GM12878 (cell line): ENCODE measurements at regions of chrX and their contacts with region 1.

Region 1: GRCh38 chrX:7059214-7059838 is 88.2 kb upstream of the STS start:
- DNase-seq: peak; percentile 89
- ATAC-seq: peak; percentile 95
- H3K4me3 ChIP-seq: peak overlapping the region; percentile 34; the same call in 1 of the 2 replicates
- H3K27ac ChIP-seq: peak overlapping the region; percentile 72
- H3K4me1 ChIP-seq: peaks cover 25% of the 10 kb centered on the region
- H3K27me3 ChIP-seq: no peaks in the 10 kb centered on the region
- CTCF ChIP-seq: no peak; a peak in 1 of 6 replicates
- EP300 ChIP-seq: peak; percentile 90 to 93
- POLR2A ChIP-seq: no peak
- RAD21 ChIP-seq: peak; percentile 45

Region 2: GRCh38 chrX:6748595-6748994 is 310.7 kb before region 1 on chrX:
- CTCF ChIA-PET with region 1: no interaction called
- POLR2A ChIA-PET with region 1: no interaction called
- RAD21 ChIA-PET with region 1: no interaction called
- SMC1A ChIA-PET with region 1: no interaction called
- in situ Hi-C with region 1: loop called (anchors 10 kb)
- intact Hi-C with region 1: no loop called
- DNase-seq: no peak
- ATAC-seq: peak; percentile 64
- H3K4me3 ChIP-seq: no peak overlapping the region
- H3K27ac ChIP-seq: no peak overlapping the region
- H3K4me1 ChIP-seq: no peaks in the 10 kb centered on the region
- H3K27me3 ChIP-seq: no peaks in the 10 kb centered on the region
- CTCF ChIP-seq: no peak
- EP300 ChIP-seq: no peak
- POLR2A ChIP-seq: no peak
- RAD21 ChIP-seq: no peak

Region 3: DNA sequence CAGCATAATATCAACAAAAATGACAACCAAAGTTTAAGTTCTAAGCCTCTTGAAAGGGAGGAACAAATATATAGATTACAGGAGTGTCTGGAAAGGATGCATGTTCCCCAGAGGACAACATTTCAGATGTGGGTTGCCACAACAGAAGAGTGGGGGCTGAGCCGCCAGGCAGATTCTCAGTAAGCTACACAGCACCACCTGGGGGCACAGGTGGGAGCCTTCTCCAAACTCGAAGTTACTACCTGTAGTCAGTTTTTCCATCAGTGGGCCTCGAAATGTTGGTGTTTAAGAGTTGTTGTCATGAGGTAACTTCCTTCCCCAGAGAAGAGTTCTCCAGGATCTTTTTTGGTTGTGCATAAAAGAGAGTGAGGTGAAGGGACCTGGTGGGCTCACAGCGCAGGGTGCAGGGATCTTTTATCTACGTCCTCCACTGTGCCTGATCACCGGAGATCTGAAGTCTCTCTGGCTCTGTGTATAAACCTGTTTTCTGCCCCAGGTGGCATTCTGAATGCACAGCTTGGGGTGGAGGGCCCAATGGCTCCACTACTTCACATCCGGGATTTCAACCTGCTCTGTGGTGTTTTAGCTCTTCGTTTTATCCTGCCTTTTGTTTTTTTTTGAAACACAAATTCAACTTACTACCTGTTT is 29.8 kb after region 1 on chrX:
- CTCF ChIA-PET with region 1: interaction called, 15 read pairs
- POLR2A ChIA-PET with region 1: interaction called, 4 read pairs
- RAD21 ChIA-PET with region 1: interaction called, 30 read pairs
- SMC1A ChIA-PET with region 1: interaction called, 55 read pairs
- in situ Hi-C with region 1: no loop called
- intact Hi-C with region 1: loop called (anchors 1 kb)
- DNase-seq: no peak
- ATAC-seq: peak; percentile 57
- H3K4me3 ChIP-seq: no peak overlapping the region
- H3K27ac ChIP-seq: peak overlapping the region; percentile 42; the same call in 1 of the 2 replicates
- H3K4me1 ChIP-seq: peaks cover 48% of the 10 kb centered on the region
- H3K27me3 ChIP-seq: no peaks in the 10 kb centered on the region
- CTCF ChIP-seq: peak; percentile 51 to 61 (median 59)
- EP300 ChIP-seq: no peak
- POLR2A ChIP-seq: no peak
- RAD21 ChIP-seq: peak; percentile 78

Region 4: GRCh38 chrX:7147978-7148824 is 88.9 kb after region 1 on chrX and contains the start of gene PUDP:
- CTCF ChIA-PET with region 1: interaction called, 3 read pairs
- POLR2A ChIA-PET with region 1: interaction called, 3 read pairs
- RAD21 ChIA-PET with region 1: interaction called, 3 read pairs
- SMC1A ChIA-PET with region 1: interaction called, 11 read pairs
- in situ Hi-C with region 1: no loop called
- intact Hi-C with region 1: loop called (anchors 2 kb)
- DNase-seq: no peak
- ATAC-seq: peak; percentile 86
- H3K4me3 ChIP-seq: peak within 1 kb of the TSS; percentile 98
- H3K27ac ChIP-seq: peak within 1 kb of the TSS; percentile 87
- H3K4me1 ChIP-seq: peaks cover 15% of the 10 kb centered on the region
- H3K27me3 ChIP-seq: no peaks in the 10 kb centered on the region
- CTCF ChIP-seq: peak in 2 of 3 experiments; percentile 25; a peak in 3 of 6 replicates
- EP300 ChIP-seq: no peak
- POLR2A ChIP-seq: peak; percentile 78
- RAD21 ChIP-seq: peak; percentile 9; the same call in 1 of the 2 replicates
- polyA plus RNA-seq, gene PUDP: 68.9 to 83.5 TPM